ENCODE measurements at regions of chr5 and their contacts with region 1.

Region 1: GRCh38 chr5:138542956-138543729 is at the start of gene ETF1:
- DNase-seq: peak; percentile 100
- H3K4me3 ChIP-seq: peak within 1 kb of the TSS; percentile 95 to 99
- H3K27ac ChIP-seq: peak within 1 kb of the TSS; percentile 99
- H3K4me1 ChIP-seq: peaks cover 16 to 38% of the 10 kb centered on the region in 2 donors
- H3K27me3 ChIP-seq: no peaks in the 10 kb centered on the region
- CTCF ChIP-seq: no peak
- total RNA-seq, gene ETF1: 28.2 TPM

Region 2: GRCh38 chr5:138352071-138352721 is 190.9 kb before region 1 on chr5 and contains the start of gene KDM3B:
- intact Hi-C with region 1: loop called (anchors 5 kb)
- DNase-seq: peak; percentile 60 to 94
- H3K4me3 ChIP-seq: peak within 1 kb of the TSS; percentile 96 to 100
- H3K27ac ChIP-seq: peak within 1 kb of the TSS; percentile 89 to 98
- H3K4me1 ChIP-seq: peaks cover 4 to 38% of the 10 kb centered on the region in 2 donors
- H3K27me3 ChIP-seq: no peaks in the 10 kb centered on the region
- CTCF ChIP-seq: peak; percentile 96 to 100 (median 96)
- total RNA-seq, gene KDM3B: 33.4 TPM

Region 3: DNA sequence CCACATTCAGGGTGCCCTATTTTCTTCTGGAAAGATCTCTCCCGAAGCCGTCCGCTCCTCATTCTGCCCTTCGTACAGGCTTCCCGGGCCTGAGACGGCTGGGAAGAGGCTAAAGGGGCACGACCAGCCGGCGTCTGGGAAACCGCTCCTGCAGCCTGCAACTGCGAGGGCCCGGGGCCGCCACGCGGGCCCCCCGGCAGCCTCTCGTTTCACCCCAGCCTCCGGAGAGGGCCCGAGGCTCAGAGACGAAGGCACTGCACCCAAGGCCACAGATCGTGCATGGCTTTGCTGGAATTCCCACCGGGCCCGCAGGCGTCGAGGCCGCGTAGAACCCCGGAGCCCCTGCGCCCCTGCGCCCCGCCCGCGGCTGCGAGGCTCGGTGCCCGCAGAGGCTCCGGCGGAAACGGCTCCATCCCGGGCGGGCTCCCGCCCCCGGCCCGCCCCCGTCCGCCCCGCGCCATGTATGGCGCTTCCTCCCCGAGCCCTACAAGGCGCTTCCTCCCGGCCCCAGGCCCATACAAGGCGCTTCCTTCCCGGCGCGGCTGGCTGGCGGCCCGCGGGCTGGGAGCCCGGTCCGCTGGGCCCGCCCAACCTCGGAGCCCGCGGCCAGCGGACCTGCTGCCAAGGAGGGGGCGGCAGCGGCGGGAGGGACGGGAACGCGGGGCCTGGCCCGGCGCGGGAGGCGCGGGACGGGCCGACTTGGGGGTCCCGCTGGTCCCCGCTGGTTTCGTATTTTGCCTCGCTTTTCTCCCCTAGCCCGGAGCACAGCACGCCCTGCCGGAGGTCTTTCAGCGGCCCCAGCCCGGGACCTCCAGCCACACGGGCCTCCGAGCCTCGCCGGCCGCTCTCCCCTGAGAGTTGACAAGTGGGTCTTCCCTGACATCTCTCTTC is 51.2 kb before region 1 on chr5:
- intact Hi-C with region 1: loop called (anchors 5 kb)
- DNase-seq: peak; percentile 71 to 96
- H3K4me3 ChIP-seq: peak overlapping the region; percentile 57 to 68
- H3K27ac ChIP-seq: peak overlapping the region; percentile 42 to 78
- H3K4me1 ChIP-seq: peaks cover 9 to 31% of the 10 kb centered on the region in 2 donors
- H3K27me3 ChIP-seq: no peaks in the 10 kb centered on the region
- CTCF ChIP-seq: no peak

Region 4: GRCh38 chr5:138575194-138576015 is 32.3 kb after region 1 on chr5 and contains the start of gene HSPA9:
- intact Hi-C with region 1: loop called (anchors 1 kb)
- DNase-seq: peak; percentile 96 to 100
- H3K4me3 ChIP-seq: peak within 1 kb of the TSS; percentile 89 to 90
- H3K27ac ChIP-seq: peak within 1 kb of the TSS; percentile 97 to 99
- H3K4me1 ChIP-seq: peaks cover 5 to 15% of the 10 kb centered on the region in 2 donors
- H3K27me3 ChIP-seq: no peaks in the 10 kb centered on the region
- CTCF ChIP-seq: peak in 1 of 3 experiments; percentile 11
- total RNA-seq, gene HSPA9: 75.5 TPM

Region 5: GRCh38 chr5:138737494-138738265 is 194.5 kb after region 1 on chr5:
- intact Hi-C with region 1: no loop called
- DNase-seq: no peak
- H3K4me3 ChIP-seq: no peak overlapping the region
- H3K27ac ChIP-seq: no peak overlapping the region
- H3K4me1 ChIP-seq: no peaks in the 10 kb centered on the region
- H3K27me3 ChIP-seq: no peaks in the 10 kb centered on the region
- CTCF ChIP-seq: no peak

Region 6: DNA sequence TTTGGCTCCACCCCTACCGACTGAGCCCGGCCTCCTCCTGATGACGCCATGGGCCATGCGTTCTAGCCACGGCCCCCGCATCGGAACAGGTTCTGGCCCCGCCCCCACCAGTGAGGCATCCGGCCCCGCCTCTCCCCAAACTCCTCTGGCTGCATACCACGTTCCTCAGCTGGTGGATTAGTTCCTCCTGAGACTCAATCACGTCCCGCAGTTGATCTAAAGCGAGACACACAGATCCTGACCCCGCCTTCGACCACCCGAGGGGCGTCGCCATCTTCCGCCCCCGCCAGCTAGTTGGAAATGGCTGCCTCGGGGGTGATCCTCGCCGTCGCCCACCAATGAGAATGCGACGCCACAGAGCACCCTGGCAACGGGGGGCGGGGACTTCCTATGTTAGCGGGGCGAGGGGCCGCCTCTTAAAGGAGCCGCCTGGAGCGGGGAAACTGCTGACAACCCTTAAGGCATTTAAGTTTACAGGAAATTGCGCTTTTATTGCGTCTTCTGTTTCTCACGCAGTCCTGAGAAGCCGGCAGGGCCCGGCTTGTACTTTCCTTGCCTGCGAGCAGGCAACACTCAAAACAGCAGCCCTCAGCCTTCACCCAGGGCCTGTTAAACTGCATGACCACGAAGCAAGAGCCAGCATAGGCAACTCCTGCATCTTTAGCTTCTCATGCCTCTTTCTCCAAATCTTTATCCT is 860.8 kb after region 1 on chr5 and contains the start of gene SPATA24:
- intact Hi-C with region 1: loop called (anchors 5 kb)
- DNase-seq: peak; percentile 94 to 99
- H3K4me3 ChIP-seq: peak within 1 kb of the TSS; percentile 61 to 62
- H3K27ac ChIP-seq: peak within 1 kb of the TSS; percentile 88 to 90
- H3K4me1 ChIP-seq: peaks cover 0 to 10% of the 10 kb centered on the region in 2 donors
- H3K27me3 ChIP-seq: no peaks in the 10 kb centered on the region
- CTCF ChIP-seq: no peak
- total RNA-seq, gene SPATA24: not detected

Measured in ascending aorta (tissue), 2 donors.